ENCODE measurements at regions of chr6 and their contacts with region 1.

Region 1: GRCh38 chr6:96626759-96627364 is 63.9 kb downstream of the FHL5 start:
- DNase-seq: peak; percentile 46
- CTCF ChIP-seq: peak; percentile 10

Region 2: GRCh38 chr6:96468681-96469224 is 158.1 kb before region 1 on chr6:
- in situ Hi-C with region 1: no loop called
- DNase-seq: no peak
- CTCF ChIP-seq: no peak

Region 3: DNA sequence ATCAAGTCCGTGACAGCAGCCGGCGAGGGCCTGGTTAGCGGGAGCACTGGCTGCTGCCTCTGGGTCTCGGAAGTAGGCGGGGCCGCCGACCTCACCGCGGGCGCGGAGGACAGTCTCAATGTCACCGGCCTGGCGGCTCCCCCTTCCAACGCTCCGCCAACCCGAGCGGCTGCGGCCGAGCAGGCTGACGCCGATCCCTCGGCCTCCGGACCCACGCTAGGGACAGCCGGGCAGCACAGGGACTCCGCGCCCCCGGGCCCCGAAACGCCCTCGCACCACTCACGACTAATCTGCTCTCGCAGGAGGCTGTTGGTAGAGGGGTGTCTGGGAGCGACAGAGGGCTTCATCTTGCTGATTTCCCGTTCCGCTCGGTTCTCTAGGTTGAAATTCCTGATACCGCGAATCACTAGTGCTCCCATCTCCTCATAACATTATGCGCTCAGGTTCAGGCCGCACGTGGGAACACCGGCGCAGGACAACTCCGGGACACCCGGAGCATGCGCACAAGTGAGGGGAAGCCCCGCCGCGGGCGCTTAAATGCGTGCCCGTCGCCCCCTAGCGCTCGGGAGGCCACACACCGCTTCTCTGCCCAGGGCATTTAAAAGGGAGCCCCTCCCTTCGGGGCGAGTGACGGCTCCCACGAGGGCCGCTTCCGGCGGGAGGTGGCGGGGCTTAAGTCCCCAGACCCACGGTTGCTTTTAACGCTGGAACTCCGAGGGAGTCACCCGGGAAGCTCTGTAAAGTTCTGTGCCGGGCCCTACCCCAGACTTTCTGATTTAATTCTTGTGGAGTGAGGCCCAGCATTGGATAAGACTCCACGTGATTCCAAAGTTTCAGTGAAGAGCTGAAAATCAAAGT is 270.8 kb after region 1 on chr6 and contains the start of gene NDUFAF4:
- in situ Hi-C with region 1: loop called (anchors 25 kb)
- DNase-seq: peak; percentile 94
- CTCF ChIP-seq: peak; percentile 85

Region 4: DNA sequence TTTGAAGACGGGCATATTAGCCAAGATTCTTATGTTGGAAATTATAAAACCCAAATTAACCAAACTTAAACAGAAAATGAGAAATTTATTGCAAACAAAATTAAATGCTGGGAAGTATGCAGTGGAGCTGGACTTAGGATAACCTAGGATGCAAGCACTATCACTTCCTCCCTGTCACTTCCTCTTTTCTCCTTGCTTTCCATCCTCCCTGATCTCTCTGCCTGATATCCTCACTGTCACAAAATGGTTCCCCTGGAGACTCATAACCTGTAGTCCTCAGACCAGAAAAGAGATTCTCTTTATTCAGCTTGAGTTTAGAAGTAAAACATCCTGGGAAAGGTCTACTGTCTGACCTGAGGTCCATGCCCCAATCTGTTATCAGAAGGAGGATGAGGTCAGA is 290.2 kb after region 1 on chr6:
- in situ Hi-C with region 1: no loop called
- DNase-seq: no peak
- CTCF ChIP-seq: no peak

Measured in GM13976 (cell line).